Ascending aorta (tissue), 2 donors: ENCODE measurements at regions of chr5 and their contacts with region 1.

Region 1: DNA sequence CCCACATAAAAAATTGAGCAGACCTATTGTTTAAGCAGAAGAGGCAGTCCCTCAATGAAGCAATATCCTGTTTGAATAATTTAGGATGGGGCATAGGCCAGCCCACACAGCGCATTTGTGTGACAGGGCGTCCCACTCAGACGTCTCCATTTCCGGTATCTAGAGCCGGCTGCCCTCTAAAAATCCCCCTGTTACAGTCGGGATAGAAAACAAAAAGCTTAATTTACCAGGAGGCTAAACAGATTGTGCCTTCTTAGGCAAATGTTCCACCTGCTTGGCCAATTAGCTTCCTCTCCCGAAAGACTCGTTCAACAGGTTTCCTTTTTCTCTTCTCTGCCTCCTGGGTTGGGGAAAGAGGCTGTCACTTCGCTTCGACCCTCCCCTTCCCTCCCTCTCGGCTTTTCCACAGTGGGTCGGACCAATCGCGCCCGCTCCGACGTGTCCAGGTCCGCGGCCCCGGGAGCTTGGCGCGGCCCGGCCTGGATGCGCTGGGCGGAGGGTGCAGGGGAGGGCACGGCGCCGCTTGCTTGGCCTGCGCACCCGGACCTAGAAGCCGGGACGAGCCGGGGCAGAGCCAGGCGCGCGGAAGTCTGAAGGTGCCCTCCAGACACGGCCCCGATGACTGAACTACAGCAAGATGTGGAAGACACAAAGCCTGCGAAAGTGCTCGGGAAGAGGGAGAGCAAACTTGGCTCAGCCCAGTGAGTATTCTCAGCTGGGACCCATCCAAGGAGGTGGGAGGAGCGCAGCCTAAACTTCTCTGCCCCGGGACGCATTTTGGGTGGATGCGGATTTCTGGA is at the start of gene GRAMD2B:
- DNase-seq: peak; percentile 47 to 93
- H3K4me3 ChIP-seq: peak within 1 kb of the TSS; percentile 58 to 64
- H3K27ac ChIP-seq: peak within 1 kb of the TSS; percentile 83 to 91
- H3K4me1 ChIP-seq: peaks cover 0 to 24% of the 10 kb centered on the region in 2 donors
- H3K27me3 ChIP-seq: no peaks in the 10 kb centered on the region
- CTCF ChIP-seq: no peak
- total RNA-seq, gene GRAMD2B: 55.6 TPM

Region 2: GRCh38 chr5:126384985-126385384 is 38.2 kb before region 1 on chr5:
- intact Hi-C with region 1: loop called (anchors 2 kb)
- DNase-seq: no peak
- H3K4me3 ChIP-seq: no peak overlapping the region
- H3K27ac ChIP-seq: peak overlapping the region; percentile 86 to 90
- H3K4me1 ChIP-seq: peaks cover 26 to 41% of the 10 kb centered on the region in 2 donors
- H3K27me3 ChIP-seq: no peaks in the 10 kb centered on the region
- CTCF ChIP-seq: no peak

Region 3: DNA sequence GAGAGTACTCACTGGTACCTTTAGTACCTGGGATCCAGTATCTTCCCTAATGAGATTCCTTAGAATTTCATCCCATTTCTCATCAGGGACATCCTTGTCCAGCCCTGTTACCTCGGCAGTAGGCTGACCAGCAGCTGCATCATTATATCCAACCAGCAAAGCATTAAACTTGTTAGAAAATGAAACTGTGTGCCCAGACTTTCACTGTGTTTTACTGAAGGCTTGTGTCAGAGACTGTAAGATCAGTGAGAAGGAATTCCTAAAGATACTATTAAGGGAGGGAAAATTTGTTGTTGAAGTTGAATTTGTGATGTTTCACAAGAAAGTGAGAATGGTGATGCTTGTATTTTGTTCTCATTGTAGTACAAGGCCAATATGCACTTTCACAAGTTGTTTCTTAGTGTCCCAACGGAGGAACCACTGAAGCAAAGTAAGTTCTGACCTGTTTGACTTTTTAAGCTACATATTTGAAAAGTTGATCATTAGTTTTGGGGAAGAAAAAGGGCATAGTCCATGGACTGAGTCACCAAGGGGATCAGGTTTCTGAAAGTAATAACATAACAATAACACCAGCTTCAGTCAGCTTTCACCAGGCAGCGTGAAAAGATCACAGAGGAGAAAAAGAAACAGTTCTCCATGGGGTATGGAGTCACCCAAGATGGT is 48.8 kb after region 1 on chr5:
- intact Hi-C with region 1: loop called (anchors 5 kb)
- DNase-seq: no peak
- H3K4me3 ChIP-seq: no peak overlapping the region
- H3K27ac ChIP-seq: peak overlapping the region; percentile 62 to 74
- H3K4me1 ChIP-seq: peaks cover 0 to 17% of the 10 kb centered on the region in 2 donors
- H3K27me3 ChIP-seq: no peaks in the 10 kb centered on the region
- CTCF ChIP-seq: no peak